Gastrocnemius medialis (tissue), 4 donors: ENCODE measurements at regions of chr17 and their contacts with region 1.

Region 1: DNA sequence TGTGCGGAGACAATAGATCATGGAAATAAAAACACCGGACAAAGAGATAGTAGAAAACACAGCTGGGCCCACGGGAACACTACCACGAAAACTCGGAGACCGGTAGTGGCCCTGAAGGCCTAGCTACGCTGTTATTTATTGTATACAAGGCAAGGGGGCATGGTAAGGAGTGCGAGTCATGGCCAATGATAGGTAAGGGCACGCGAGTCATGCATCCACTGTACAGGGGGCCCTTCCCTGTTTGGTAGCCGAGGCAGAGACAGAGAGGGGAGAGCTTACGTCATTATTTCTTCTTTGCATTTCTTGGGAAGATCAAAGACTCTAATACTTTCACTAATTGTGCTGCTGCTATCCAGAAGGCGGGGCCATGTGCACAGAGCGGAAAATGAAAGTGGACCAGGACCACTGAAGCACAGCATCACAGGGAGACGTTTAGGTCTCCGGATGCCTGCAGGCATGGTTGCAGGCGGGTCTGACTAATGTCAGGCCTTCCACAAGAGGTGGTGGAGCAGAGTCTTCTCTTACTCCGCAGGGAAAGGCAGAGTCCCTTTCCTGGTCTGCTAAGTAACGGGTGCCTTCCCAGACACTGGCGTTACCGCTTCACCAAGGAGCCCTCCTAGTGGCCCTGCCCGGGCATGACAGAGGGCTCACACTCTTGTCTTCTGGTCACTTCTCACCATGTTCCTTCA is 74.4 kb upstream of the ARL4D start:
- DNase-seq: no peak
- ATAC-seq: no peak
- H3K4me3 ChIP-seq: no peak overlapping the region
- H3K27ac ChIP-seq: no peak overlapping the region
- H3K4me1 ChIP-seq: peaks cover 9 to 10% of the 10 kb centered on the region in 2 donors
- H3K27me3 ChIP-seq: no peaks in the 10 kb centered on the region
- CTCF ChIP-seq: peak in 1 of 5 experiments; percentile 13
- POLR2A ChIP-seq: no peak

Region 2: GRCh38 chr17:42428141-42428944 is 896.0 kb before region 1 on chr17:
- in situ Hi-C with region 1: no loop called
- intact Hi-C with region 1: no loop called
- DNase-seq: no peak
- ATAC-seq: peak in 1 of 2 donors; percentile 35
- H3K4me3 ChIP-seq: no peak overlapping the region
- H3K27ac ChIP-seq: no peak overlapping the region
- H3K4me1 ChIP-seq: peaks cover 14 to 26% of the 10 kb centered on the region in 2 donors
- H3K27me3 ChIP-seq: no peaks in the 10 kb centered on the region
- CTCF ChIP-seq: peak in 4 of 5 experiments; percentile 25 to 50 (median 40)
- POLR2A ChIP-seq: no peak

Region 3: GRCh38 chr17:43006639-43007551 is 317.5 kb before region 1 on chr17 and contains the start of gene IFI35:
- in situ Hi-C with region 1: loop called in 1 of 4 experiments (anchors 25 kb)
- intact Hi-C with region 1: no loop called
- DNase-seq: peak; percentile 66 to 77
- ATAC-seq: peak; percentile 74 to 81
- H3K4me3 ChIP-seq: peak within 1 kb of the TSS; percentile 63 to 75 (median 67)
- H3K27ac ChIP-seq: peak within 1 kb of the TSS; percentile 78 to 84 (median 84)
- H3K4me1 ChIP-seq: peaks cover 2 to 18% of the 10 kb centered on the region in 2 donors
- H3K27me3 ChIP-seq: no peaks in the 10 kb centered on the region
- CTCF ChIP-seq: peak in 2 of 5 experiments; percentile 48 to 49
- POLR2A ChIP-seq: peak; percentile 16 to 32
- total RNA-seq, gene IFI35: 1.3 to 11.0 (median 4.0) TPM

Region 4: GRCh38 chr17:43140396-43141332 is 183.7 kb before region 1 on chr17:
- in situ Hi-C with region 1: no loop called
- intact Hi-C with region 1: no loop called
- DNase-seq: no peak
- ATAC-seq: no peak
- H3K4me3 ChIP-seq: no peak overlapping the region
- H3K27ac ChIP-seq: no peak overlapping the region
- H3K4me1 ChIP-seq: no peaks in the 10 kb centered on the region
- H3K27me3 ChIP-seq: no peaks in the 10 kb centered on the region
- CTCF ChIP-seq: no peak
- POLR2A ChIP-seq: no peak

Region 5: GRCh38 chr17:43211480-43212402 is 112.6 kb before region 1 on chr17 and contains the start of gene TMEM106A:
- in situ Hi-C with region 1: loop called in 1 of 4 experiments (anchors 25 kb)
- intact Hi-C with region 1: no loop called
- DNase-seq: peak; percentile 44 to 45
- ATAC-seq: peak; percentile 67 to 70
- H3K4me3 ChIP-seq: peak within 1 kb of the TSS; percentile 51 to 63 (median 54)
- H3K27ac ChIP-seq: peak within 1 kb of the TSS; percentile 51 to 75 (median 62)
- H3K4me1 ChIP-seq: no peaks in the 10 kb centered on the region
- H3K27me3 ChIP-seq: no peaks in the 10 kb centered on the region
- CTCF ChIP-seq: peak in 2 of 5 experiments; percentile 13 to 20
- POLR2A ChIP-seq: peak; percentile 4 to 19
- total RNA-seq, gene TMEM106A: 0.32 to 5.6 (median 2.5) TPM

Region 6: DNA sequence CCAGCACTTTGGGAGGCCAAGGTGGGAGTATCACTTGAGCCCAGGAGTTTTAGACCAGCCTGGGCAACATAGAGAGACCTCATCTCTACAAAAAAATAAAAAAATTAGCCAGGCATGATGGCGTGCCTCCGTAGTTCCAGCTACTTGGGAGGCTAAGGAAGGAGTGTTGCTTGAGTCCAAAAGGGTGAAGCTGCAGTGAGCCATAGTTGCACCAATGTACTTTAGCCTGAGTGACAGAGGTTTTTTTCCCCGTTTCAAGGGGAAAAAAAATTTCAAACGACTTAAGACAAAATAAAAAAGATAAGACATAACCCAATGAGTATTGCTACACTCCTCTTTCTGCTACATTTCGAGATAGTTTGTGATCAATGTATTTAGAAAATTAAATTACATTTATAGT is 166.3 kb after region 1 on chr17:
- in situ Hi-C with region 1: no loop called
- intact Hi-C with region 1: no loop called
- DNase-seq: no peak
- ATAC-seq: no peak
- H3K4me3 ChIP-seq: no peak overlapping the region
- H3K27ac ChIP-seq: no peak overlapping the region
- H3K4me1 ChIP-seq: peaks cover 9 to 11% of the 10 kb centered on the region in 2 donors
- H3K27me3 ChIP-seq: no peaks in the 10 kb centered on the region
- CTCF ChIP-seq: no peak
- POLR2A ChIP-seq: no peak